ENCODE measurements at regions of chr17 and their contacts with region 1.

Region 1: DNA sequence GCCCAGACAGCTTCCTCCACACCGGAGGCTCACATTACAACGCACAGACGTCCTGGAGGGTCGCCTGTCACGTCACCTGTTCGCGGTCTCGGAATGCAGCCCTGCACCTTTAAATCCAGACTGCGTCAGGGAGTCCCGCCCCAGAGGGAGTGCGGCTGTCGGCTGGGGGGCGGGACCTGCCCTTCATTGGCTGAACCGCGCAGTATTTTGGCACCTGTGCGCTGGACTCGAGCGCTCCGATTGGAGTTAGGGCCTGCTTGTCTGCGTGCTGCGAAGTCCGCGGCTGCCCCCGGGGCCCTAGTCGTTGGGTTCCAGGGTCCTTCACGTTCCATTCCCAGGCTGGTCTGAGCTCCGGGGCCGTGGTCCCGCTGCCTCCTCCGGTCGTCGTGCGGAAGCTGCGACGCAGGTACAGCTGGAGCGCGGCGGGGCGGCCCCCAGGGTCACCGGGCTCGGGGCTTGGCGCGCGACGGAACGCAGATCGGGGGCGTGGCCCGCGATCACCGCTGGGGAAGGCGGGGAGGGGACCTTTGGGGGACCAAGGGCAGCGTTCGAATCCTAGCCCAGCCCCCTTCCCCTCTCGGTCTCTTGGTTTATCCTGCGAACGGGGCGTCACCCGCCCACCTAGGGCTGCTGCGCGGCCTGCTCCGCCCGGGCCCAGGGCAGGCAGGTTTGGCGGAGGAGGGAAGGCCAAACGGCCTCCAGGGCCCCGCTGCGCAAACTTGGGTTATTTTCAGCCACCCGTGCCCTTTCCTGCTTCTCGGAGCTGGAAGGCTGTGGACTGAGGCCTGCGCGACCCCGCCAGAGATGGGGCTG is at the start of gene MIEF2:
- DNase-seq: peak; percentile 95
- H3K4me3 Mint-ChIP-seq: peak within 1 kb of the TSS; percentile 78
- H3K27ac Mint-ChIP-seq: peak within 1 kb of the TSS; percentile 73
- H3K4me1 Mint-ChIP-seq: peaks cover 30% of the 10 kb centered on the region
- H3K27me3 Mint-ChIP-seq: no peaks in the 10 kb centered on the region
- total RNA-seq, gene MIEF2: 6.0 to 7.1 TPM

Region 2: GRCh38 chr17:17972126-17972951 is 288.2 kb before region 1 on chr17 and contains the starts of genes DRC3 and TOM1L2:
- CTCF ChIA-PET with region 1: no interaction called
- intact Hi-C with region 1: loop called (anchors 2 kb)
- DNase-seq: peak; percentile 100
- H3K4me3 Mint-ChIP-seq: peak within 1 kb of the TSS; percentile 90
- H3K27ac Mint-ChIP-seq: peak within 1 kb of the TSS; percentile 75
- H3K4me1 Mint-ChIP-seq: peaks cover 35% of the 10 kb centered on the region
- H3K27me3 Mint-ChIP-seq: no peaks in the 10 kb centered on the region
- total RNA-seq, gene DRC3: 0.40 to 0.64 TPM
- total RNA-seq, gene TOM1L2: 9.8 to 9.9 TPM

Region 3: GRCh38 chr17:18225121-18225566 is 35.4 kb before region 1 on chr17:
- CTCF ChIA-PET with region 1: no interaction called
- intact Hi-C with region 1: loop called (anchors 1 kb)
- DNase-seq: peak; percentile 97
- H3K4me3 Mint-ChIP-seq: peak overlapping the region; percentile 70
- H3K27ac Mint-ChIP-seq: no peak overlapping the region
- H3K4me1 Mint-ChIP-seq: peaks cover 24% of the 10 kb centered on the region
- H3K27me3 Mint-ChIP-seq: no peaks in the 10 kb centered on the region

Region 4: DNA sequence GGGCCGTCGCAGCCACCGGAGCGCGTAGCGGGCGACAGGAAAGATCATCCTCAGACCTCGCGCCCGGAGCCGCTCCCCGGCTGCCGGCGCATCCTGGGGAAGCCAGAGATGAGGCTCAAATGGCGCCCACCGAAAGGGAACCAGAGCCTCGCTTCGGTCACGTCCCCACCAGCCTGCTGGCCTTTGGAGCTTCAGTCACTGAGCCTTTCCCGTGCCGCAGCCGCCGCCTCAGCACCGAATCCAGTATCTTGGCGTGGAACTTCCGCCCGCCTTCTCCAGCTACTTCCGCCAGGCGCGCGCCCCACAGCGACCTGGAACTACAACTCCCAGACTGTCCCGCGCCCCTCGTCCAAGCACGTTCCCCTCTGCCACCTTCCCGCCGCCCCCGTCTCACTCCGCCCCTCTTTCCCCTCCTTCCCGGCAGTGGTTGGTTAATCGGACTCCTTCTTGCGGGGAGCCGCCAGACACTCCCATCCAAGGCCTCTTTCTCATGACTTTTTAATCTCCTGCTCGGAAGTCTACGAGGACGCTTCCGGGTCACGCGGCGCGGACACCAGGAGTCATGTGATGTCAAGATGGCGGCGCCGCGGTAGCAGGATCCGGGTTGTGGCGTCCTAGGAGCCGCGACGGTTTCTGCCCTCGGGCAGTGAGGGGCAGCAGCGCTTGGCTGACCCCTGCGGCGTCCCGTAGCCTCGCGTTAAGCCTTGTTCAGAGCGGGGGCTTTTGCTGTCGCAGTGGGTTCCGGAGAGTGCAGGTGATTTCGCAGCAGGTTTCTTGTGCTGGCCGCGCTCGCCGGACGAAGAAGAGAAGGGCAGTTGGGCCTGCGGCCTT is 54.4 kb after region 1 on chr17 and contains the starts of genes SMCR8 and TOP3A:
- CTCF ChIA-PET with region 1: interaction called, 3 read pairs
- intact Hi-C with region 1: loop called (anchors 1 kb)
- DNase-seq: peak; percentile 98
- H3K4me3 Mint-ChIP-seq: peak within 1 kb of the TSS; percentile 92
- H3K27ac Mint-ChIP-seq: peak within 1 kb of the TSS; percentile 99
- H3K4me1 Mint-ChIP-seq: peaks cover 75% of the 10 kb centered on the region
- H3K27me3 Mint-ChIP-seq: no peaks in the 10 kb centered on the region
- total RNA-seq, gene SMCR8: 8.5 to 8.8 TPM
- total RNA-seq, gene TOP3A: 59.0 to 59.5 TPM

Region 5: DNA sequence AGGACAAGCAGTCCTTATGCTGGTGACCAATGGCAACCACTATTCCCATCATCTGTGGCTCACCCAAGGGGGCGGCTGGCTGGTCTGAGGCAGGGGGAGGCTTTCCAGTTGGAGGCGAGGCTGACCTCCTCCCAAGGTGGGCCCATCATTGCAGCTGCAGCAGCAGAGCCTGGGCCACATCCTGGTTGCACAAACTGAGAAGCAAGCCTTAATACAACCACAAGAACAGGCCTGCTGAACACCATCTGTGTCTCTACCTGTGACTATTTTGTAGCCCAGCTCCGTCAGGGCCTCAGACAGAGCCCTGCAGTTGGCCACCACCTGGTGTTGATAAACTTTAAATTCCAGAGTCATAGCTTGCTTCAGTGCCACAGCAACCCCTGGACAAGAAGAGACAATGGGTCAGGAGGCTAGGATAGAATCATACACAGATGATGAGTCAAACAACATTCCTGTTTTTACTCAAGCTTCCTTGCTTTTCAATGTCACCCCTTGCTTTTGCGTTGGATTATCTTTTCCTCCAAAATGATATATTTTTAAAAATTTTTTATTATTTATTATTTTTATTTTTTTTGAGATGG is 72.5 kb after region 1 on chr17:
- CTCF ChIA-PET with region 1: no interaction called
- intact Hi-C with region 1: no loop called
- DNase-seq: no peak
- H3K4me3 Mint-ChIP-seq: no peak overlapping the region
- H3K27ac Mint-ChIP-seq: no peak overlapping the region
- H3K4me1 Mint-ChIP-seq: no peaks in the 10 kb centered on the region
- H3K27me3 Mint-ChIP-seq: no peaks in the 10 kb centered on the region